GM12878 (cell line): ENCODE measurements at regions of chr14 and their contacts with region 1.

Region 1: GRCh38 chr14:72023722-72024407 is 91.6 kb downstream of the RGS6 start:
- DNase-seq: peak; percentile 43
- ATAC-seq: peak; percentile 90
- H3K4me3 ChIP-seq: no peak overlapping the region
- H3K27ac ChIP-seq: no peak overlapping the region
- H3K4me1 ChIP-seq: peaks cover 15% of the 10 kb centered on the region
- H3K27me3 ChIP-seq: no peaks in the 10 kb centered on the region
- CTCF ChIP-seq: peak; percentile 61 to 76 (median 64)
- EP300 ChIP-seq: no peak
- POLR2A ChIP-seq: no peak
- RAD21 ChIP-seq: peak; percentile 80

Region 2: DNA sequence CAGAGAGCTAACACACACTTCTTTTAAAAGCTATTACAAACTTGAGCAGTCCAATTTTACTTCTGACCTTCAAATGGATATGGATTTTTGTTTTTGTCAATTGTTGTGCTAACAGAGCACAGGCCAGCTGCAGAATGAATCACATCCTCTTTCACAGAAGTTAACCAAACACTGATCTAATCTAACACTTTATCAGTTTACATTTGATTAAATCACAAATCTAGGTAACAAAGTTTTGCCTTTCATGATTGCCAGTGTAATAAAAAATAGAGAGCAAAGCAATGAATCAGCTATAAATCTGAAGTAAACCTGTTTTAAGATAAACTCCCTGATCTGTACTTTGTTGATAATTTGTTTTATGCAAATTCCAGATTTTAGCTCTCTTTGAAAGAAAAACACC is 364.7 kb before region 1 on chr14:
- CTCF ChIA-PET with region 1: no interaction called
- POLR2A ChIA-PET with region 1: no interaction called
- RAD21 ChIA-PET with region 1: no interaction called
- SMC1A ChIA-PET with region 1: no interaction called
- in situ Hi-C with region 1: no loop called
- intact Hi-C with region 1: no loop called
- DNase-seq: no peak
- ATAC-seq: peak; percentile 69
- H3K4me3 ChIP-seq: no peak overlapping the region
- H3K27ac ChIP-seq: no peak overlapping the region
- H3K4me1 ChIP-seq: peaks cover 3% of the 10 kb centered on the region; the same call in 1 of the 2 replicates
- H3K27me3 ChIP-seq: no peaks in the 10 kb centered on the region
- CTCF ChIP-seq: no peak
- EP300 ChIP-seq: no peak
- POLR2A ChIP-seq: no peak
- RAD21 ChIP-seq: no peak

Region 3: GRCh38 chr14:71855399-71856036 is 168.3 kb before region 1 on chr14:
- CTCF ChIA-PET with region 1: interaction called, 6 read pairs
- POLR2A ChIA-PET with region 1: no interaction called
- RAD21 ChIA-PET with region 1: interaction called, 7 read pairs
- SMC1A ChIA-PET with region 1: interaction called, 3 read pairs
- in situ Hi-C with region 1: no loop called
- intact Hi-C with region 1: loop called (anchors 10 kb)
- DNase-seq: peak; percentile 31
- ATAC-seq: peak; percentile 85
- H3K4me3 ChIP-seq: no peak overlapping the region
- H3K27ac ChIP-seq: peak overlapping the region; percentile 58; the same call in 1 of the 2 replicates
- H3K4me1 ChIP-seq: peaks cover 10% of the 10 kb centered on the region
- H3K27me3 ChIP-seq: no peaks in the 10 kb centered on the region
- CTCF ChIP-seq: peak; percentile 68 to 77 (median 71)
- EP300 ChIP-seq: no peak
- POLR2A ChIP-seq: no peak
- RAD21 ChIP-seq: peak; percentile 78

Region 4: DNA sequence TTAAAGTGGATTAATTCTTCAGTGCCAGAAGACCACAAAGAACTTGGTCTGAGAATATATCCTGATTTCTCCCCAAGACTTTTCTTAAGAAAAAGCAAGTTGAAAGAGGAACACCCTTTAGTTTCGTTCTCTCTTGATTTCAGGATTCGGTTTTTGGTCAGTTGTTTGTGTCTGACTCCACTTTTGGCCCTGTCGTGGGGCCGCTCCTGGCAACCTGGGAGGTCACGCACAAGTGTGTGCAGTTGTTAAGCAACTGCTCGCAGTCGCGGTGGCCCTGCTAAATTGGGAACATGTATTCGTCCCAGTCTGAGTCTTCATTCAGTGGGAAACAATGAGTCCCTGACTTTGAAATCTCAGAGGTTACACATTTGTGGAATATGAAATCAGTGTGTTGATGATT is 23.0 kb before region 1 on chr14:
- CTCF ChIA-PET with region 1: interaction called, 6 read pairs
- POLR2A ChIA-PET with region 1: no interaction called
- RAD21 ChIA-PET with region 1: interaction called, 6 read pairs
- SMC1A ChIA-PET with region 1: interaction called, 25 read pairs
- in situ Hi-C with region 1: no loop called
- intact Hi-C with region 1: no loop called
- DNase-seq: peak; percentile 34
- ATAC-seq: peak; percentile 93
- H3K4me3 ChIP-seq: no peak overlapping the region
- H3K27ac ChIP-seq: peak overlapping the region; percentile 27; the same call in 1 of the 2 replicates
- H3K4me1 ChIP-seq: no peaks in the 10 kb centered on the region
- H3K27me3 ChIP-seq: no peaks in the 10 kb centered on the region
- CTCF ChIP-seq: no peak
- EP300 ChIP-seq: peak; percentile 65 to 74; a peak in 3 of 4 replicates
- POLR2A ChIP-seq: no peak
- RAD21 ChIP-seq: no peak

Region 5: DNA sequence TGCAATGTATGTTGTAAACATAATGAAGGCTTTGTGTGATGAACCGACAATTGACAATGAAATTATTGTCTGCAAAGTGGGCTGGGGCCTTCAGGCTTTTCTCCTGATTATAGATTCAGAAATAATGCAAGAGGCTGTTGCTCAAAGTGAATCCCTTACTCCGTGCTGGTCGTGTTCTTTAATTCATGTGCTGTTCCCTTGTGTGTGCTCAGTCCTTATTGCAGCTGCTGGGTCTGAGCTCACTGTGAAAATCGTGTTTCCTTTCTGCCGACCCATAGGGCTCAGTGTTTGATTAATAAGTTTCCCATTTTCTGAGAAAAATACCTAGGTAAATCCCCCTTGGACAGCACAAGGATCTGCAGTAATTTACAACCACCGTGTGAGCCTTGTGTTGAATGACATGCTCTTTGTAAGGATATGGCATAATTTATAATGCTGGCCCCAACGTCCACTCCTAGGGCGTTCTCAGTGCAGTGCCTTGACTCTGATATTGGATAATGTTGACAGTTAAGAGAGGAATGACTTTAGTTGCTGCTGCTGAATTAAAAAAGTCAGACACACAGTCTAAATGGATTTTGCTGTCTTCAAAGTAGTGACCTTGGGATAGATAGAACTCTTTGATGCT is 10.0 kb before region 1 on chr14:
- CTCF ChIA-PET with region 1: interaction called, 9 read pairs
- POLR2A ChIA-PET with region 1: interaction called, 7 read pairs
- RAD21 ChIA-PET with region 1: interaction called, 9 read pairs
- SMC1A ChIA-PET with region 1: interaction called, 16 read pairs
- in situ Hi-C with region 1: no loop called
- intact Hi-C with region 1: no loop called
- DNase-seq: no peak
- ATAC-seq: peak; percentile 51
- H3K4me3 ChIP-seq: no peak overlapping the region
- H3K27ac ChIP-seq: no peak overlapping the region
- H3K4me1 ChIP-seq: no peaks in the 10 kb centered on the region
- H3K27me3 ChIP-seq: no peaks in the 10 kb centered on the region
- CTCF ChIP-seq: no peak
- EP300 ChIP-seq: no peak
- POLR2A ChIP-seq: no peak
- RAD21 ChIP-seq: no peak

Region 6: DNA sequence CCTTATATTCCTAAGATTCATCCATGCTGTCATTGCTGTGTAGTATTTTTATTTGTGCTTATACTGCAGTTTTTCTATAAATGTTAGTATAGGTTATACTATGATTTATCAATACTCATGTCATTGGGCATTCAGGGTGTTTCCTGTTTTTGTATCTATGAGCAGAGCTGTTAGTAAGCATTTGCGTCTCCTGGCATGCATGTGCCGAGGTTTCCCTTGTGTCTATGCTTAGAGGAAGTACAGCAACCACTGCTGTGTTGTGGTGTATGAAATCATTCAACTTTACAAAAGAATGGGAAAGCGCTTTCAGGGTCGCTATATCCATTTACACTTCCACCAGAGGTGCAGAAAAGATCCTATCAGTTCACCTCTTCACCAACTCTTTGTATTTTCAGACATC is 31.0 kb after region 1 on chr14:
- CTCF ChIA-PET with region 1: interaction called, 41 read pairs
- POLR2A ChIA-PET with region 1: interaction called, 3 read pairs
- RAD21 ChIA-PET with region 1: interaction called, 12 read pairs
- SMC1A ChIA-PET with region 1: interaction called, 22 read pairs
- in situ Hi-C with region 1: no loop called
- intact Hi-C with region 1: no loop called
- DNase-seq: no peak
- ATAC-seq: peak; percentile 76
- H3K4me3 ChIP-seq: no peak overlapping the region
- H3K27ac ChIP-seq: no peak overlapping the region
- H3K4me1 ChIP-seq: no peaks in the 10 kb centered on the region
- H3K27me3 ChIP-seq: no peaks in the 10 kb centered on the region
- CTCF ChIP-seq: no peak
- EP300 ChIP-seq: no peak
- POLR2A ChIP-seq: no peak
- RAD21 ChIP-seq: no peak

Region 7: GRCh38 chr14:72094844-72095582 is 71.1 kb after region 1 on chr14:
- CTCF ChIA-PET with region 1: interaction called, 46 read pairs
- POLR2A ChIA-PET with region 1: interaction called, 5 read pairs
- RAD21 ChIA-PET with region 1: interaction called, 23 read pairs
- SMC1A ChIA-PET with region 1: interaction called, 18 read pairs
- in situ Hi-C with region 1: no loop called
- intact Hi-C with region 1: loop called (anchors 5 kb)
- DNase-seq: peak; percentile 48
- ATAC-seq: peak; percentile 81
- H3K4me3 ChIP-seq: 0 out of 2 replicates have a peak overlapping the region, but pooled peaks have one; percentile 39
- H3K27ac ChIP-seq: peak overlapping the region; percentile 53
- H3K4me1 ChIP-seq: no peaks in the 10 kb centered on the region
- H3K27me3 ChIP-seq: no peaks in the 10 kb centered on the region
- CTCF ChIP-seq: no peak
- EP300 ChIP-seq: peak in 1 of 2 experiments; percentile 35; a peak in 2 of 4 replicates
- POLR2A ChIP-seq: no peak
- RAD21 ChIP-seq: peak; percentile 21; the same call in 1 of the 2 replicates

Region 8: DNA sequence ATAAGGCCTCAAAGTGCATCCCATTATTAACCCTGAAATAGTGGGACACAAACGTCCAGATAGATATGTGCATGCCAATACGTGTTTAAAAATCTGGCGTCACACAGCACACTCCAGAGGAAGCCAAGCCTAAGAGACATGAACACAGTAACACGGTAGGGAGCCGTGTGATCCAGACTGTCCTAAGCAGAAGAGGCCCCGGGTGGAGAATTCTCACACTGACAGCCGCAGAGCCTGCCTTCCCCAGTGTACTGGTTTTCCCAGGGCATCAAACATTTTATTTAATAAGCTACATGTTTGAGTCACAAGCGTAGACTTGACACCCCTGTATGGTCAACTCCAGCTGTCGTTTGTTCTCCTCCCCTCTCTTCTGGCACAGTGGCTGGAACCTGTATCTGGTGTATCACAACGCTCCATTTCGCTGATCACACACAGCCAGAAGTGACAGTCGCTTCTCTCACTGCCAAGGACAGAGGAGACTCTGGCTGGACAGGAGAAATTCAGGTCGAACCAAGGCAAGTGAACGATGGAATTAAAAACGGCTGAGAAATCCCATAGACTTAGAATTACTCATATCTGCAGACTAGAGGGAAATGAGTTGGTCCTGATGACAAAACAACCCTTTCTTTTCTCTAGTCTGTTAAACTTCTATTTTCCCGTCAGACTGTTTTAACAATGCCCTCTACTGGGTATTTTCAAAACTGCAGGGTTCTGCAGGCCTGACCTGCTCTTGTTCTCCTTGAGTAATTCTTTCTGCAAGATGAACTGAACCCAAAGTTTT is 268.2 kb after region 1 on chr14:
- CTCF ChIA-PET with region 1: interaction called, 28 read pairs
- POLR2A ChIA-PET with region 1: no interaction called
- RAD21 ChIA-PET with region 1: interaction called, 6 read pairs
- SMC1A ChIA-PET with region 1: interaction called, 5 read pairs
- in situ Hi-C with region 1: no loop called
- intact Hi-C with region 1: loop called (anchors 1 kb)
- DNase-seq: peak; percentile 31
- ATAC-seq: peak; percentile 88
- H3K4me3 ChIP-seq: no peak overlapping the region
- H3K27ac ChIP-seq: no peak overlapping the region
- H3K4me1 ChIP-seq: no peaks in the 10 kb centered on the region
- H3K27me3 ChIP-seq: no peaks in the 10 kb centered on the region
- CTCF ChIP-seq: peak; percentile 68 to 73 (median 71)
- EP300 ChIP-seq: no peak
- POLR2A ChIP-seq: no peak
- RAD21 ChIP-seq: peak; percentile 84